OCI-LY7 (cell line): ENCODE measurements at regions of chr10 and their contacts with region 1.

Region 1: GRCh38 chr10:119207367-119207668 is at the start of gene GRK5:
- DNase-seq: peak; percentile 98
- H3K4me3 ChIP-seq: peak within 1 kb of the TSS; percentile 75
- H3K27ac ChIP-seq: peak within 1 kb of the TSS; percentile 69
- H3K4me1 ChIP-seq: peaks cover 28% of the 10 kb centered on the region
- CTCF ChIP-seq: no peak
- total RNA-seq, gene GRK5: 4.2 and 4.7 TPM in 2 replicates

Region 2: GRCh38 chr10:119368991-119369869 is 161.9 kb after region 1 on chr10:
- CTCF ChIA-PET with region 1: no interaction called
- POLR2A ChIA-PET with region 1: interaction called, 3 read pairs
- intact Hi-C with region 1: loop called (anchors 5 kb)
- DNase-seq: peak; percentile 94
- H3K4me3 ChIP-seq: peak overlapping the region; percentile 59
- H3K27ac ChIP-seq: peak overlapping the region; percentile 69
- H3K4me1 ChIP-seq: peaks cover 39% of the 10 kb centered on the region
- CTCF ChIP-seq: no peak

Region 3: DNA sequence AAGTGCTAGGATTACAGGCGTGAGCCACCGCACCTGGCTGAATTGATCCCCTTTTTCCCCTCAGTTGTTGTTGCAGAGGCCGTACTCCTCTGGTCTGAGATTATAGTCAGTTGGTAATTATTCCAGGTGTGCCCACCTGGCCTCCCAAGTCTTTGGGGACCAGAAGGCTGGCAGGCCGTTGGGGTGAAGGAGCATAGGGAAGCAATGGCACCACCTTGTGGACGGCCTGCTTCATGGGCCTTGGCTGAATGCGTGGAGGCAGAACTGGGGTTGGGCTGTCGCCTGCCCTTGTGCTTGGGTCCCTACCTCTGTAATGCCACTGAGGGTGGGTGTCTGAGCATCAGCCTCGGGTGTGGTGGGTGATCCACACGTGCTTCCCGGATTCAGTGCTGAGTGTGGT is 209.5 kb after region 1 on chr10:
- CTCF ChIA-PET with region 1: interaction called, 5 read pairs
- POLR2A ChIA-PET with region 1: interaction called, 3 read pairs
- intact Hi-C with region 1: loop called (anchors 1 kb)
- DNase-seq: peak; percentile 82
- H3K4me3 ChIP-seq: no peak overlapping the region
- H3K27ac ChIP-seq: no peak overlapping the region
- H3K4me1 ChIP-seq: no peaks in the 10 kb centered on the region
- CTCF ChIP-seq: peak; percentile 89

Region 4: DNA sequence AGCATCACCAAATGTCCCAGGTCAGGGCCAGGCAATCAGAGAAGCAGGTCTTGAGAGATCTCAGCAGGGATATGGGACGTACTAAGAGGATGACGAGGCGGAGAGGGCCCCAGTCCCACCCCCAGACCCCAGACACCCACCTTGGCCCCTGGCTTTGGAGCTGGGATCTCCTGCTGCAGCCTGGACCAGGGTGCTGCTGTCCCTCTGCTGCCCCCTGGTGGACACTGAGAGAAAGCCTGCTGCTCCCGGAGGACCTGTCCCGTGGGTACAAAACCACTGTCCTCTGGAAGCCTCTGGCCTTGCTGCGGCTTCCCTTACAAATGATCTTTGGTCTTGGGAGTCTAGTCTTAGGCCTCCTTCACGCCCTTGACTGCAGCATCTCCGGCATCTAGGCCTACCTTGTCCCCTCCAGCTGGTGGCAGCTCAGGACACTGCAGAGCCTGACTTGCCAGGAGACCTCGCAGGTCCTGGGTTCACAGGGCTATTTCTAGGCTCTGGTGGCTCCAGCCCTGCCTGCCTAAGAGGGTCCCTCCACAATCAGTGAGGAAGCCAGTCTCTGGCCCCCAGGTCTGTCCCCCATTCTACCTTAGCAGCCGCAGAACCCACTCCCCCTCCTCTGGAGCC is 238.1 kb after region 1 on chr10:
- CTCF ChIA-PET with region 1: interaction called, 7 read pairs
- POLR2A ChIA-PET with region 1: no interaction called
- intact Hi-C with region 1: loop called (anchors 1 kb)
- DNase-seq: peak; percentile 82
- H3K4me3 ChIP-seq: no peak overlapping the region
- H3K27ac ChIP-seq: no peak overlapping the region
- H3K4me1 ChIP-seq: peaks cover 26% of the 10 kb centered on the region
- CTCF ChIP-seq: peak; percentile 92

Region 5: GRCh38 chr10:119478111-119478802 is 270.9 kb after region 1 on chr10:
- CTCF ChIA-PET with region 1: interaction called, 3 read pairs
- POLR2A ChIA-PET with region 1: interaction called, 3 read pairs
- intact Hi-C with region 1: loop called (anchors 1 kb)
- DNase-seq: peak; percentile 90
- H3K4me3 ChIP-seq: peak overlapping the region; percentile 59
- H3K27ac ChIP-seq: peak overlapping the region; percentile 77
- H3K4me1 ChIP-seq: peaks cover 32% of the 10 kb centered on the region
- CTCF ChIP-seq: no peak